Tibial artery (tissue), 4 donors: ENCODE measurements at regions of chr6 and their contacts with region 1.

Region 1: GRCh38 chr6:100116411-100117194 is 122.6 kb upstream of the MCHR2 start:
- DNase-seq: no peak
- H3K4me3 ChIP-seq: no peak overlapping the region
- H3K27ac ChIP-seq: no peak overlapping the region
- H3K4me1 ChIP-seq: no peaks in the 10 kb centered on the region
- H3K27me3 ChIP-seq: peaks cover 0 to 3% of the 10 kb centered on the region in 2 donors
- CTCF ChIP-seq: peak; percentile 61 to 67

Region 2: DNA sequence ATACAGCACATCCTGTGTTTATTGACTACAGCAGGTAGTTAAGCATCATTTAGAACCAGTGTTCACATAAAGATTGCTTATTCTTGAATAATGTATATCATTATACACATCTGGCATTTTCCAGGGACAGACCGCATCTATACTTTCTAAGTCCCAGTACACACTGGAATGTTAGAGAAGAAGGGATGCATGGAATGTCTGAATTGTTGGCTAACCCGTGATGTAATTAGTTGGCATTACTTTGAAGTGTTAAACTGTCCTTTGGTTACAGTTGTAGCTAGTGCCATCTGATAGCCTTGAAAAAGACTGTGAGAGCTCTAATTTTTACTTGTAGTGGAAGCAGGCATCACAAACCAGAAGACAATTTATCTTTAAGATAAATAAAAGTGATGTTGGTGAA is 92.8 kb before region 1 on chr6:
- intact Hi-C with region 1: no loop called
- DNase-seq: no peak
- H3K4me3 ChIP-seq: no peak overlapping the region
- H3K27ac ChIP-seq: no peak overlapping the region
- H3K4me1 ChIP-seq: no peaks in the 10 kb centered on the region
- H3K27me3 ChIP-seq: no peaks in the 10 kb centered on the region
- CTCF ChIP-seq: no peak

Region 3: DNA sequence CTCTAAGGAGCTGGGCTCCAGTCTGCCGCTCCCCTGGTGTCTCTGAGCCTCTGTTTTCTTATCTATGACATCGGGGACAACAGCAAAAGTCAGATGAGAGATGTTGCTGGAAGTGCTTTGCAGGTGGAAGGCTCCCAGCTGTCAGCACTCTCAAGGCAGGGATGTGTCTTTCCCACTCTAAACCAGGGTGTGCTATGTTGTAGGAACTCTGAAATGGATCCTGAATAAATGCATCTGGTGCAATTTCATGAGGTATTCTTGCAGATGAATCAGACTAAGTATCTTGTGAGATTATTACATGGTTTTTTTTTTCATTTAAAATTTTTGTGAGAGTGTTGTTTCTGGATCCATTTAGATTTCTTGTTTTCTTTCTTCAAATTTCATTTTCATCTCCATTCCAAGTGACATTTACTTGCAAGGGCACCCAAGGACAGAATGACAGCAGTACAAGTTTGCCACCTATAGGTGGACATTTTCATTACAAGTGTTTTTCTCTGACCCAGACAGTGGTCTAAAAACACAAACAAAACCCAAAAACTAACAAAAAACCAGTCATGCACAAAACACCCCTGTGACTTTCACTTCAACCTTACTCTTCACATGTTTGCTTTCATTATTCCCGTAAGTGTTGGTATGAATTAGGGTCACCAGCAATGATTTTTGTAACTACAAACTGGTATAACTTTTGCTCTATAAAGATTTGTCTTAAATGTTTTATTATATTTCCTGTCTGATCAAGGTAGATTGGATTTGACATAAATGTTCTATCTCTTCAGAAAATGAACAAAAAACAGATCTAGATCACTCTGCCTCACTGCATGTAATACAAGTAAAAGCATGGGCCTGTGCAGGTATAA is 362.8 kb after region 1 on chr6:
- intact Hi-C with region 1: loop called (anchors 5 kb)
- DNase-seq: no peak
- H3K4me3 ChIP-seq: no peak overlapping the region
- H3K27ac ChIP-seq: no peak overlapping the region
- H3K4me1 ChIP-seq: no peaks in the 10 kb centered on the region
- H3K27me3 ChIP-seq: peaks cover 0 to 2% of the 10 kb centered on the region in 2 donors
- CTCF ChIP-seq: peak; percentile 55 to 71

Region 4: GRCh38 chr6:100664274-100665040 is 547.9 kb after region 1 on chr6:
- intact Hi-C with region 1: loop called (anchors 5 kb)
- DNase-seq: no peak
- H3K4me3 ChIP-seq: no peak overlapping the region
- H3K27ac ChIP-seq: no peak overlapping the region
- H3K4me1 ChIP-seq: no peaks in the 10 kb centered on the region
- H3K27me3 ChIP-seq: no peaks in the 10 kb centered on the region
- CTCF ChIP-seq: peak; percentile 51 to 62